Activated CD4-positive, alpha-beta memory T cell treated with anti-CD3 and anti-CD28 coated beads for 36 hours (primary cell): ENCODE measurements at regions of chr11 and their contacts with region 1.

Region 1: DNA sequence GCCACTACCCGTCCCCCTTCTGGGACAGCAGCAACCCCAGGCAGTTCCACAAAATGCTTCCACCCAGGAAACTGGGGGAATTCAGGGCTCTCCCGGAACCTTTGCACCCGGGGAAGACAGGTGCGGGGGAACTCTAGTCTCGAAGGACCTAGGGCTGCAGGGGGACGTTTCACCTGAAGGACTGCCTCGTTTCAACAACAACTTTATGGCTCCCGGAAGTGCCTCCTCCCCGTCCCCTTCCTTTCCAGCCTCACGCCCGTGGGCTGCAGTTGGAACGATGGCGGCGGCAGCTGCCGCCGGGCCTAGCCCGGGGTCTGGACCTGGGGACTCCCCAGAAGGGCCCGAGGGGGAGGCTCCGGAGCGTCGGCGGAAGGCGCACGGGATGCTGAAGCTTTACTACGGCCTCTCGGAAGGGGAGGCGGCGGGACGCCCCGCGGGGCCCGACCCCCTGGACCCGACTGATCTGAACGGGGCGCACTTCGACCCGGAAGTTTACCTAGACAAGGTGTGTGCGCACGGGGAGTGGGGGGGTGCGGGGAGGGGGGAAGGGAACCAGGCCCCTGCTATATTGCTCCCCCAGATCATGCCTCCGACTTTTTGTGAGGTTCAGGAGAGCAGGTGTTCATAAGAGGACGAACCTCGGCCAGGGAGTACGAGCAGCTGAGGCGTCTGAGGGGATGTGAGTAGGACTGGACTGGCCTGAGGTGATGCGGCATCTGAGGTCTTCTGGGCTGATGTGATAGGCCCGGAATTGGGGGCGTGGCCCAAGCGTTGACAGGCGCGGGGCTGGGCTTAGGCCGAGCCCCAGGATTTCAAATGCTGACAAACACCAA is at the start of gene VPS51:
- DNase-seq: peak; percentile 91
- H3K4me3 Mint-ChIP-seq: peak within 1 kb of the TSS; percentile 93
- H3K27ac Mint-ChIP-seq: peak within 1 kb of the TSS; percentile 97
- H3K4me1 Mint-ChIP-seq: peaks cover 17% of the 10 kb centered on the region
- H3K27me3 Mint-ChIP-seq: no peaks in the 10 kb centered on the region
- total RNA-seq, gene VPS51: 97.1 to 99.2 TPM

Region 2: DNA sequence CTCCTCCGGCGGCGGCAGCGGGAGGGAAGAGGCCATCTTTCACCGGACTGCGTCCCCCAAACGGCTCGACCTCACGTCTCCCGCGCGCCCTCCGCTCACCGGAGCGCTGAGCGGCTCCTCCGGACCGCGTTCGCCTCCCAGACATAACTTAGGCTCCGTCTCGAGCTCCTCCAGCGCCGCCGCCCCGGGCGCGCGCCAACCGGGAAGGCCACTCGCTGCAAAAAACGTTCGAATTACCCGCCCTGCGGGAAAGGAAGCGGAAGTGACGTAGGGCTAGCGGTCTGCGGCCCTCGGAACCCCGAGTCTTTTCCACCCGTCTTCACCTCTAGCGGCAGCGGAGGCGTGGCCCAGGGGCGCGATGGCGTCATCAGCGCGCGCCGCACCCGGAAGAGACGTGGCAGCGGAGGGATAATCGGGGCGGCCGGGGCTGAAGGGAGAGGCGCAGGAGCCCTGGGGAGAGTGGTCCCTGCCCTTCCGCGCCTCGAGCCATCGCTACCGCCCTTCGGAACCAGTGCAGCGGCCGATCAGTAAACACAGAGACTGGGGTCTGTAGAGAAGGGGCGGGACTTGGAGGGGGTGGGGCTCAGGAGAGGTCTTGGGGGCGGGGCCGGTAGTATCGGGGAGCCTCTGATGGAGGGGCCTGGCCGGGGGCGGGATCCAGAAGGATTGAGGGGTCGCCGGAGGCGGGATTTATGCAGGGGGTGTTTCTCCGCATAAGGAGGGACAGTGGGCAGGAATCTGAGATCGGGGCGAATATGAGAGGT is 12.2 kb before region 1 on chr11 and contains the starts of genes CDCA5 and ZFPL1:
- CTCF ChIA-PET with region 1: no interaction called
- POLR2A ChIA-PET with region 1: interaction called, 17 read pairs
- intact Hi-C with region 1: loop called (anchors 1 kb)
- DNase-seq: peak; percentile 97
- H3K4me3 Mint-ChIP-seq: peak within 1 kb of the TSS; percentile 99
- H3K27ac Mint-ChIP-seq: peak within 1 kb of the TSS; percentile 96
- H3K4me1 Mint-ChIP-seq: peaks cover 36% of the 10 kb centered on the region
- H3K27me3 Mint-ChIP-seq: no peaks in the 10 kb centered on the region
- total RNA-seq, gene CDCA5: 111 to 112 TPM
- total RNA-seq, gene ZFPL1: 28.3 to 31.3 TPM

Region 3: GRCh38 chr11:65111744-65112414 is 15.7 kb after region 1 on chr11 and contains the start of gene TM7SF2:
- CTCF ChIA-PET with region 1: interaction called, 122 read pairs
- POLR2A ChIA-PET with region 1: interaction called, 15 read pairs
- intact Hi-C with region 1: loop called (anchors 1 kb)
- DNase-seq: peak; percentile 96
- H3K4me3 Mint-ChIP-seq: peak within 1 kb of the TSS; percentile 84
- H3K27ac Mint-ChIP-seq: peak within 1 kb of the TSS; percentile 80
- H3K4me1 Mint-ChIP-seq: peaks cover 56% of the 10 kb centered on the region
- H3K27me3 Mint-ChIP-seq: no peaks in the 10 kb centered on the region
- total RNA-seq, gene TM7SF2: 19.2 to 21.0 TPM